ENCODE measurements at regions of chr7 and their contacts with region 1.

Region 1: GRCh38 chr7:129367700-129368388 is 66.4 kb upstream of the STRIP2 start:
- DNase-seq: no peak
- H3K4me3 ChIP-seq: no peak overlapping the region
- H3K27me3 ChIP-seq: no peaks in the 10 kb centered on the region
- CTCF ChIP-seq: peak; percentile 92

Region 2: GRCh38 chr7:129351320-129351719 is 16.5 kb before region 1 on chr7:
- CTCF ChIA-PET with region 1: interaction called, 11 read pairs
- POLR2A ChIA-PET with region 1: no interaction called
- DNase-seq: no peak
- H3K4me3 ChIP-seq: no peak overlapping the region
- H3K27me3 ChIP-seq: no peaks in the 10 kb centered on the region
- CTCF ChIP-seq: no peak

Region 3: DNA sequence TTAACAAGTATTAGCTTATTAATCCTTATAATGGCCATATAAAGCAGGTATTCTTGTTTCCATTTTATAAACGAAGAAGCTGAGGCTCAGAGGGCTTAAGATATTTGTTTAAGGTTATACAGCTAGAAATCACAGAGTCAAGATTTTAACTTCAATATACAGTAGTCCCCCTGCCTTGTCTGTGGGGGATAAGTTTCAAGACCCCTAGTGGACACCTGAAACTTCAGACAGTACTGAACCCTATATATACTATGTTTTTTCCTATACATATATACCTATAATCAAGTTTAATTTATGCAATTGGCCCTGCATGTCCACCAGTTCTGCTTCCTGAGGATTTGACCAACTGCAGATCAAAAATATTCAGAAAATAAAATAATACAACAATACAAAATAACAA is 22.0 kb after region 1 on chr7:
- CTCF ChIA-PET with region 1: interaction called, 19 read pairs
- POLR2A ChIA-PET with region 1: no interaction called
- DNase-seq: no peak
- H3K4me3 ChIP-seq: no peak overlapping the region
- H3K27me3 ChIP-seq: no peaks in the 10 kb centered on the region
- CTCF ChIP-seq: no peak

Region 4: DNA sequence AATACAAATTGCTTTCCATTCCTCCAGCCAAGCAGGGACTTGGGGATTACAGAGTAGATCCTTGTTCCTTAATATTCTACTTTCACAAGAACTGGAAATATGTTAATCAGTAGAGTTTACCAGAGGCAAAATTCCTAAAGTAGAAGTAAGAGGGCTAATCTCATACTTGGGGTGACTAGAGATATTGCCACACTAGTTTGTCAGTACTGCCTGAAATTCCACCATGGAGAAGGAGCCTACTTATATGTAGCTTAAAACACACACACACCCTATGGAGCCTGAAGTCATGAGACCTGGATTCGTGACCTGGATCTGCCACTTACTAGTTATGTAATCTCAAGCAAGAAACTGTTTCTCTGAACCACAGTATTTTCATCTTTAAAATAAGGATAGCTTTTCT is 100.2 kb after region 1 on chr7:
- CTCF ChIA-PET with region 1: interaction called, 154 read pairs
- POLR2A ChIA-PET with region 1: no interaction called
- DNase-seq: peak; percentile 14
- H3K4me3 ChIP-seq: no peak overlapping the region
- H3K27me3 ChIP-seq: no peaks in the 10 kb centered on the region
- CTCF ChIP-seq: no peak

Region 5: GRCh38 chr7:129635300-129636029 is 267.6 kb after region 1 on chr7:
- CTCF ChIA-PET with region 1: interaction called, 76 read pairs
- POLR2A ChIA-PET with region 1: no interaction called
- DNase-seq: no peak
- H3K4me3 ChIP-seq: no peak overlapping the region
- H3K27me3 ChIP-seq: no peaks in the 10 kb centered on the region
- CTCF ChIP-seq: peak; percentile 93

Measured in BJ (cell line).